ENCODE measurements at regions of chr14 and their contacts with region 1.

Region 1: DNA sequence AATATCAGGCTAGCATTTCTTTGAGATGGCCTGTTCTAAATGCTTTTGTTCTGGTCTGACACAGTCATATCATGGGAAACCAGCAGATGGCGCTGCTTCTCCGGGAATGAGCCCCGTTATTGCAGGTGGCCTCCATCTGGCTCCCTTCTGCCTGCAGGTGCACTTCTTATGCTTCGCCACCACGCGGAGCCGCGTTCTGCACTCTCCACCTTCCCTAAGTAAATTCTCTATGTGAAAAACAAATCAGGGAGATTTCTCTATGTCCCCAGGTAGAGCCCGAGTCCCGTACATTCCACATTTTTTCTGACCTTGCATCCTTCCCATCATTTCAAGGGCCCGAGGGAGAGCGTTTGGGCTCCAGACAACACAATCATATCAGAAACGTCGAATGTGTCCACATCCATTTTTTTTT is 26.2 kb downstream of the GLRX5 start:
- DNase-seq: peak; percentile 89
- CTCF ChIP-seq: peak; percentile 90

Region 2: DNA sequence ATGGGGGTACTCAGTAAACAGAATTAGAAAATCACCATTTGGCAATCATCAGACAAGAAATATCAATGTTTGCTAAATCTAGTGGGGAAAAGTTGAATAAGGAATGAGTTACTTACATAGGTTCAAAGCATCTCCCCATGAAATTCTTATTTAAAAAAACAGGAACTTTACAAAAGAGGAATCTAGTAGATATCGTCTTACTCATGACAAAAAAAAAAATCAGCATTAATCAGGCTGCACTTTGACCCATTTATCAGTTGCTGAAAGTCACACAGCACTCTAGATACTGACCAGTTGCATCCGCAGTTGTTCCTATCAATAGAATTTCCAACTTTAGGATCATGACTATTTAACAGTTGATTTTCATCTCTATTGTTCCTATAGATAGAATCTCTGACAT is 397.9 kb before region 1 on chr14:
- CTCF ChIA-PET with region 1: no interaction called
- POLR2A ChIA-PET with region 1: no interaction called
- DNase-seq: no peak
- CTCF ChIP-seq: no peak

Region 3: GRCh38 chr14:95472819-95473251 is 88.2 kb before region 1 on chr14:
- CTCF ChIA-PET with region 1: no interaction called
- POLR2A ChIA-PET with region 1: no interaction called
- DNase-seq: no peak
- CTCF ChIP-seq: no peak

Region 4: GRCh38 chr14:95545179-95546168 is 15.5 kb before region 1 on chr14:
- CTCF ChIA-PET with region 1: interaction called, 15 read pairs
- POLR2A ChIA-PET with region 1: no interaction called
- DNase-seq: no peak
- CTCF ChIP-seq: no peak

Region 5: GRCh38 chr14:95575840-95576473 is 14.9 kb after region 1 on chr14:
- CTCF ChIA-PET with region 1: interaction called, 16 read pairs
- POLR2A ChIA-PET with region 1: no interaction called
- DNase-seq: no peak
- CTCF ChIP-seq: no peak

Measured in GM10248 (cell line).